Left colon (tissue), 2 donors: ENCODE measurements at regions of chr12 and their contacts with region 1.

Region 1: GRCh38 chr12:118372541-118373495 is at the start of gene TAOK3:
- DNase-seq: peak; percentile 97 to 99
- ATAC-seq: peak; percentile 83
- total RNA-seq, gene TAOK3: 58.4 to 58.5 TPM

Region 2: GRCh38 chr12:118183705-118184104 is 189.1 kb before region 1 on chr12:
- intact Hi-C with region 1: loop called (anchors 5 to 10 kb)
- DNase-seq: no peak
- ATAC-seq: no peak

Region 3: DNA sequence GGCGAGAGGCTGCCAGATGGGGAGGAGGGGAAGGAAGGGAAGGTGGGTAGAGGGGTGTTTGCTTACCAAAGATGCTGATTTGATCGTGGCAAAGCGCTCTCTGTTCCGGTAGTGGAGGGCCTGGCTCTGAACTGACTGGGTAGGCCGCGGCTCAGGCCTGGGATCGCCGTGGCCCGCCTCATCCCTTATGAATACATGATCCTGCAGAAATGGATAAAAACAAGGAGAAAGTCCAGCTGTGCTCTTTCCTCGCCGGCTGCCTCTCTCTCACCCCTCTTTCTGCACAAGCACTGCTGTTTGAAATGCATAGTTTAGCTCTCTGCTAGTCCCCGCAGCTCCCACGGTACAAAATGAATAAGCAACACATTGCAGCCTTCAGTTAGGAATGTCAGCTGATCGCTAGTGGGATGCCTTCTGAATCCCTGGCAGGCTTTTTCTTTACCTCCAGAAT is 183.1 kb before region 1 on chr12:
- intact Hi-C with region 1: loop called (anchors 5 to 10 kb)
- DNase-seq: no peak
- ATAC-seq: no peak

Region 4: DNA sequence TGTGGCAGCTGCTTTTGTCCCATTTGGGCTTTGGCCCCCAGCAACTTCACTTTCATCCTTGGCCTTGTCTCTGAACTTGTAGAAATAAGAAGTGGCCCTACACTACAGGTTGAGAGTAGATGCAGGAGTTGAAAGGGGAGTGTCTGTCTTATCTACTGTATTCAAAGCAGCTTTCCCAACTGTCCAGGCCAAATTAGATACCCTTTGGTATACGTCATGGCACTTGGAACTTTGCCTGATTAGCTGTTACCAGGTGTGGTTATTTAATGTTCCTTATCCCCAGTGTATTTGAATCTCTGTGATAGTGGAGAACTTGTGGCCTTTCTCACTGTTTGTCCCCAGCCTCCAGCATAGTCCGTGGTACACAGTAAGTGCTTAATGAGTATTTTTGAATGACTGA is 37.0 kb after region 1 on chr12:
- intact Hi-C with region 1: no loop called
- DNase-seq: no peak
- ATAC-seq: peak; percentile 65